B cell (primary cell): ENCODE measurements at regions of chr6 and their contacts with region 1.

Region 1: DNA sequence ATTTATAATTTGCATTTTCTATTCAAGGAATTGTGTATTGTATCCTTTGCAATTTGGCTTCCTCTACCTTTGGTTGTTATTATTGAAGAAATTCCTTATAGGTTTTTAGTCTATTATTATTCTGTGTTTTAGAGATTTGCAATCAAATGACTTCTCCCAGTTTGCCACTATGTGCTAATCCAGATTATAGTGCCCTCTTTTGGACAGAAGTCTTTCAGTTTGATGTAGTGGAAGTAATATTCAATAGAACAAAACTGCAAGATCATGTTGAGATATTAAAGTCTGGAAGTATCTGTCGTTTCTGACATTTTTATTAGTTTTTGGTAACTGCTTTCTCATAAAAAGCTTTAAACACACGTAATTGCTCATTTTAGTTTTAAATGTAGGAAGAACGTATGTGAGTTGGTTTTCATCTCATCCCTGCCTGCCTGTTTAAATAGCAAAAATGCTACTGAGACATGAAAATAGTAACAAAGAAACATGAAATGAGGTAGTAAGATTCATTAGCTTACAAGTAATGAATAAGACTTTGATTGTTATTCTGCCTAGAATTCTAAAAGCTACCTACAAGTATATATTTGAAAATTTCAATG is 72.8 kb downstream of the RTN4IP1 start:
- DNase-seq: peak; percentile 58
- ATAC-seq: peak; percentile 57
- H3K4me3 ChIP-seq: no peak overlapping the region
- H3K4me3 Mint-ChIP-seq: no peak overlapping the region
- H3K27ac ChIP-seq: no peak overlapping the region
- H3K27ac Mint-ChIP-seq: no peak overlapping the region
- H3K4me1 ChIP-seq: peaks cover 4% of the 10 kb centered on the region in 2 donors
- H3K4me1 Mint-ChIP-seq: peaks cover 16% of the 10 kb centered on the region
- H3K27me3 ChIP-seq: no peaks in the 10 kb centered on the region
- H3K27me3 Mint-ChIP-seq: no peaks in the 10 kb centered on the region
- CTCF ChIP-seq: peak; percentile 78

Region 2: DNA sequence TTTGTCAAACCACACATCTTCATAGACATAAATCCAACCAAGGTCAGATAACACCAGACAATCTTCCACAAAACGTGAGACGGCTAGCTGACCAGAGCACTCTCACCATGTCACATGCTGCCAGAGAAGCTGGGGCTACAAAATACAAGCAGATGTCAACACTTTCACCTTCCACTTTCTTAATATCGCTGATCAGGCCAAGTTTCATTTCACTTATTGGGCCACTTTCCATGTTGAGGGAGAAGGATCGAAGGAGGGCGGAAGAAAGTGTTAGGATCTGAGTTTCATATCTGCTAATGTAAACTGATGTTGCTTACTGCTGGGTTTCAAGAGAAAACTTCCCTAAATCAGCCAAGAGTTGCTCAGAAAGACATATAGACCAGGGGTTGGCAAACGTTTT is 647.4 kb before region 1 on chr6:
- CTCF ChIA-PET with region 1: no interaction called
- POLR2A ChIA-PET with region 1: no interaction called
- intact Hi-C with region 1: no loop called
- DNase-seq: no peak
- ATAC-seq: no peak
- H3K4me3 ChIP-seq: no peak overlapping the region
- H3K4me3 Mint-ChIP-seq: no peak overlapping the region
- H3K27ac ChIP-seq: no peak overlapping the region
- H3K27ac Mint-ChIP-seq: no peak overlapping the region
- H3K4me1 ChIP-seq: peaks cover 0 to 6% of the 10 kb centered on the region in 2 donors
- H3K4me1 Mint-ChIP-seq: peaks cover 6% of the 10 kb centered on the region
- H3K27me3 ChIP-seq: no peaks in the 10 kb centered on the region
- H3K27me3 Mint-ChIP-seq: peaks cover 5% of the 10 kb centered on the region
- CTCF ChIP-seq: no peak

Region 3: DNA sequence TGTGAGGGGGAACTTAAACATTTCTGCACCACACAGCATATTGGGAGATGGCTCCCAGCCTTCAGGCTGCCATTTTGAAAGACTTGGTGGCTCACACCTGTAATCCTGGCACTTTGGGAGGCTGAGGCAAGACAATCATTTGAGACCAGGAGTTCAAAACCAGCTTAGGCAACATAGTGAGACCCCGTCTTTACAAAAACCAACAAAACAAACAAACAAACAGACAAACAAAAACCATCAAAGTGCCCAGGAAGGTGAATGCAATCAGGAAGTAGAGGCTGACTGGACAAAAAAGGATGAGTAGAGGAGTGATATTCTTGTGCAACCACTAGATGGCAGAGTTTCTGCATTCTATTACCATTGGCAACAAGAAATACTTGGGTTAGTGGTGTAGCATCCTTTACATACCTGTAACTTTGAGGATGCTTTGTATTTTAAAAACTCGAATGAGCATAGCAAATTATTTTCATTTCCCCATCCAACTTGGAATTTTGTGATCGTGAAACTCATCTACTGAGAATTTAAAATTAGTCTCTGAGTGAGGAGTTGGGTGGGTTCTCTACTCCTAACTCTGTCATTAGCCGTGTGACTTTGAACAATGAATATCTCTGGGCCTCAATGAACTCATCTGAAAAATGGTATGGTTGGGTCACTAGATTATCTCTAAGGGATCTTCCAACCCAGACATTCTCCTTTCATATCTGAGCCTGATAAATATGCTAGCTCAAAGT is 111.5 kb before region 1 on chr6:
- CTCF ChIA-PET with region 1: interaction called, 567 read pairs
- POLR2A ChIA-PET with region 1: no interaction called
- intact Hi-C with region 1: loop called (anchors 1 kb)
- DNase-seq: peak; percentile 79
- ATAC-seq: peak; percentile 59
- H3K4me3 ChIP-seq: no peak overlapping the region
- H3K4me3 Mint-ChIP-seq: no peak overlapping the region
- H3K27ac ChIP-seq: no peak overlapping the region
- H3K27ac Mint-ChIP-seq: peak overlapping the region; percentile 60
- H3K4me1 ChIP-seq: peaks cover 19 to 22% of the 10 kb centered on the region in 2 donors
- H3K4me1 Mint-ChIP-seq: peaks cover 20% of the 10 kb centered on the region
- H3K27me3 ChIP-seq: peaks cover 0 to 3% (median 0%) of the 10 kb centered on the region in 4 experiments
- H3K27me3 Mint-ChIP-seq: peaks cover 20% of the 10 kb centered on the region
- CTCF ChIP-seq: peak; percentile 92

Region 4: DNA sequence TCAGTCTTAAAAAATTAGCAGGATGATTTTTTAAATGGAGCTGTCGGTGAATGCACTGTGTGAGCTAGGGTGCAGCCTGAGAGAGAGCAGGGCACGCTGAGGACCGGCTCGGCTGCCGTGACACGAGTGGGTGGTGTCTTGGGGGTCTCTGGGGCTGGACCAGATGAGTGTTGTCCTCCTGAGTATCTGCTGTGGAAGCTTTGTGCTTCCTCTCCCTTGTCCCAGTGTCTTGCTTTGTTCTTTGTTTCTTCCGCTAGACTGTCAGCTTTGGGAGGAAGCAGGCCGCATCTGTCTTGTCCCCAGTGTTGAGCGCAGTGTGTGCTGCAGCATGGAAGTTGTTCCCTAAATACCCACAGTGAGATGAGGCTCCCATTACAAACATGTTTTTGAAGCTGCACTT is 16.5 kb before region 1 on chr6:
- CTCF ChIA-PET with region 1: interaction called, 11 read pairs
- POLR2A ChIA-PET with region 1: no interaction called
- intact Hi-C with region 1: no loop called
- DNase-seq: no peak
- ATAC-seq: no peak
- H3K4me3 ChIP-seq: no peak overlapping the region
- H3K4me3 Mint-ChIP-seq: peak overlapping the region; percentile 20
- H3K27ac ChIP-seq: peak overlapping the region in 1 of 2 donors; percentile 48
- H3K27ac Mint-ChIP-seq: peak overlapping the region; percentile 82
- H3K4me1 ChIP-seq: peaks cover 37% of the 10 kb centered on the region in 2 donors
- H3K4me1 Mint-ChIP-seq: peaks cover 55% of the 10 kb centered on the region
- H3K27me3 ChIP-seq: no peaks in the 10 kb centered on the region
- H3K27me3 Mint-ChIP-seq: no peaks in the 10 kb centered on the region
- CTCF ChIP-seq: no peak

Region 5: DNA sequence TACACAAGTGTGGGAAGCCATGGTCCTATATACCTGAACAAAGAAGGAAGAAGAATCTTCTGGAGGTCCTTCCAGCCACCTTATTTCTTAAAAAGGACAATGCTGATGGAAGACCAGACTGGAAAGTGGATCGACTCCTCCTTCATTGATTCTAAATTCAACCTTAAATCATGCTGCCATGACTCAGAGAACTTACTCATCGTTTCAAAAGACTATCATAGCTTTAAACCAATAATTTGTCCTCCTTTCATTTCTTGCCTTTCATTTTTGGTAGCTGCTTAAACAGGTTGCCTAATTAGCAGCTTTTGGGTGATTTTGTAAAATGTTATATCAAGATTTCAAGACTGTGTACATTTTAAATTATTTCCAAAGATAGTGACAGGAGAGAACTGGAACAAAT is 12.1 kb after region 1 on chr6:
- CTCF ChIA-PET with region 1: interaction called, 68 read pairs
- POLR2A ChIA-PET with region 1: no interaction called
- intact Hi-C with region 1: no loop called
- DNase-seq: no peak
- ATAC-seq: no peak
- H3K4me3 ChIP-seq: no peak overlapping the region
- H3K4me3 Mint-ChIP-seq: no peak overlapping the region
- H3K27ac ChIP-seq: no peak overlapping the region
- H3K27ac Mint-ChIP-seq: no peak overlapping the region
- H3K4me1 ChIP-seq: no peaks in the 10 kb centered on the region
- H3K4me1 Mint-ChIP-seq: peaks cover 14% of the 10 kb centered on the region
- H3K27me3 ChIP-seq: no peaks in the 10 kb centered on the region
- H3K27me3 Mint-ChIP-seq: no peaks in the 10 kb centered on the region
- CTCF ChIP-seq: no peak

Region 6: DNA sequence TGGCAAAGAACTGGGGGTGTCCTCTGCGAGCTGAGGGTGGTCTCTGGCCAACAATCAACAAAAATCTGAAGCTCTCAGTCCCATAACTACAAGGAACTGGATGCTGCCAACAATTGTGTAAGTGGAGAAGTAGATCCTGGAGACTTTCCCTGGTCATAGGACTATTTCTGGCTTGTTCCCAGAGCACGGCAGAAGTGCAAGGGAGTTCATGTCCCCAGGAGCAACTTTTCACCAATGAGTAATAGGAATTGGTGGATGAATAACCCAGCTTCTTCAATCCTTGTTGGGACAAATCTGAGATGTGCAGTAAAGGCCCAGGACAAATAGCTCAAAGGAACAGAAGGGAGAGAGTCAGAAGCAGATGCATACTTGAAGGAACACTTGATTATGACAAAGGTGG is 168.4 kb after region 1 on chr6:
- CTCF ChIA-PET with region 1: no interaction called
- POLR2A ChIA-PET with region 1: no interaction called
- intact Hi-C with region 1: no loop called
- DNase-seq: no peak
- ATAC-seq: no peak
- H3K4me3 ChIP-seq: no peak overlapping the region
- H3K4me3 Mint-ChIP-seq: no peak overlapping the region
- H3K27ac ChIP-seq: no peak overlapping the region
- H3K27ac Mint-ChIP-seq: no peak overlapping the region
- H3K4me1 ChIP-seq: peaks cover 9 to 13% of the 10 kb centered on the region in 2 donors
- H3K4me1 Mint-ChIP-seq: peaks cover 17% of the 10 kb centered on the region
- H3K27me3 ChIP-seq: no peaks in the 10 kb centered on the region
- H3K27me3 Mint-ChIP-seq: no peaks in the 10 kb centered on the region
- CTCF ChIP-seq: no peak